ENCODE measurements at regions of chr10 and their contacts with region 1.

Region 1: DNA sequence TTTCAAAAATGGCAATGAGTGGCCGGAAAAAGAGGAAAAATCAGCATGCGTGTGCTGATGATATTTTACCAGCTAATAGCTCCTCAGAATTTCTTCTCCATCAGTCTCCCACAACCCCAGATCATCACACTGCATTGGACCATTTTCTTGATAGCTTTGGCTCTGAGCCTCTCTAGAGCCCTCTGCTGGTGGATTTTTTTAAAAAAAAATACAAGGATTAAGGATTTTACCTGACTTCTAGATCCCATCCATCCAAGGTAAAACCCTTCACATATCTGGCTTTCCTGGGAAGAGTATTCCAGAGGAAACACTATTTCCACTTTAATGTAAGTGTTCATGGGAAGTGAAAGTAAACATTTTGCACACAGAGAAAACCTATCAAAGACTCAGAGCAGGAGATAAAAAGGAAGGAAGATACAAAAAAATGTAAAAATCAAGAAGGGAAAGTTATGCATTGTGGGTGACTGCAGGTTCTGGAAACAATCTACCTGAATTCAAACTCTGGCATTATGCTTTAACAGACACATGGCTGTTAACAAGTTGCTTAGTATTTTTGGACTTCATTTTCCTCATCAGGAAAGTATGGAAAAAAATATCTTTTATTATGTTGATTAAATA is 380.9 kb downstream of the LRRTM3 start:
- DNase-seq: no peak
- H3K4me3 ChIP-seq: no peak overlapping the region
- H3K27ac ChIP-seq: no peak overlapping the region
- H3K4me1 ChIP-seq: no peaks in the 10 kb centered on the region
- H3K27me3 ChIP-seq: no peaks in the 10 kb centered on the region
- CTCF ChIP-seq: peak; percentile 9 to 40 (median 26)
- POLR2A ChIP-seq: no peak

Region 2: DNA sequence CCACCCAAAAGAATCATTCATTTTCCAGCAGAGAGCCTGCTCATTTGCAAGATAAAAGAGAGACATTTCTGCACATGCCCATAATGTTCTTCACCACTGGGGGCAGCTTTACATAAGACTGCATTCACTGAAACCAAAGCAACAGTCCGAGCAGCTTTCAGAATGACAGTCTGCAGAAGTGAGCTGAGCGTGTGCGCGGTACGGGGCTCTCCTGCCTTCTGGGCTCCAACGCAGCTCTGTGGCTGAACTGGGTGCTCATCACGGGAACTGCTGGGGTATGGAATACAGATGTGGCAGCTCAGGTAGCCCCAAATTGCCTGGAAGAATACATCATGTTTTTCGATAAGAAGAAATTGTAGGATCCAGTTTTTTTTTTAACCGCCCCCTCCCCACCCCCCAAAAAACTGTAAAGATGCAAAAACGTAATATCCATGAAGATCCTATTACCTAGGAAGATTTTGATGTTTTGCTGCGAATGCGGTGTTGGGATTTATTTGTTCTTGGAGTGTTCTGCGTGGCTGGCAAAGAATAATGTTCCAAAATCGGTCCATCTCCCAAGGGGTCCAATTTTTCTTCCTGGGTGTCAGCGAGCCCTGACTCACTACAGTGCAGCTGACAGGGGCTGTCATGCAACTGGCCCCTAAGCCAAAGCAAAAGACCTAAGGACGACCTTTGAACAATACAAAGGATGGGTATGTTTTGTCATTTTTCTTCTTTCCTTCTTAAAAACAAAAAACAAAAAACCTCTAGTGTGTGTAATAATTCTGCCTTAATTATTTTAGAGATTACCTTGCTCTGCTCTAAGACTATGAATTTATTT is 380.6 kb before region 1 on chr10 and contains the start of gene LRRTM3:
- intact Hi-C with region 1: loop called in 1 of 2 experiments (anchors 10 kb)
- DNase-seq: peak; percentile 46 to 84 (median 62)
- H3K4me3 ChIP-seq: peak within 1 kb of the TSS in 1 of 4 donors; percentile 18
- H3K27ac ChIP-seq: no peak within 1 kb of the TSS
- H3K4me1 ChIP-seq: no peaks in the 10 kb centered on the region
- H3K27me3 ChIP-seq: peaks cover 26% of the 10 kb centered on the region
- CTCF ChIP-seq: peak; percentile 53 to 76 (median 66)
- POLR2A ChIP-seq: peak; percentile 19 to 39
- total RNA-seq, gene LRRTM3: 0.23 to 4.1 (median 1.9) TPM in 7 of 9 donors, not detected in the others

Region 3: DNA sequence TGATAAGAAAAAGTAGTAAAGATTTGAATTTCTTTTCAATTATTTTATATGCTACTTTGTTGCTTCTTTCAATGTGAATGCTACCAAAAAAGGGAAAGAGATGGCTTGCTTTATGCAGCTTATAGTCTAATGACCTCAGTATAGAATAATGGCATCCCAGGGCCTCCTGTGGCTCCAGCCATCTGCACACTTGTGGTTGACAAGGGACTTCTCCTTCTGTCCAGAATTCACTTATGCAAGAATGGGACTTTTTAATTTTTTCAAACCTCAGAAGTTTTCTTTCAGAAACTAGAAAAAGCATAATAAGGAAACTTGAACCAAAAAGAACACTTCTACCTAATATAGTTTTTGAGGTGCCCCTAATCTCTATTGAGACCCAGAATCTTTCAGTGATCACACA is 78.4 kb after region 1 on chr10:
- intact Hi-C with region 1: no loop called
- DNase-seq: no peak
- H3K4me3 ChIP-seq: no peak overlapping the region
- H3K27ac ChIP-seq: no peak overlapping the region
- H3K4me1 ChIP-seq: no peaks in the 10 kb centered on the region
- H3K27me3 ChIP-seq: no peaks in the 10 kb centered on the region
- CTCF ChIP-seq: no peak
- POLR2A ChIP-seq: no peak